Left cardiac atrium (tissue), 4 donors: ENCODE measurements at regions of chr14 and their contacts with region 1.

Region 1: GRCh38 chr14:50116181-50116956 is at the start of gene VCPKMT:
- DNase-seq: peak; percentile 97
- ATAC-seq: peak; percentile 100
- total RNA-seq, gene VCPKMT: 3.1 to 5.0 TPM

Region 2: GRCh38 chr14:49862089-49862673 is 254.2 kb before region 1 on chr14:
- intact Hi-C with region 1: loop called in 1 of 2 experiments (anchors 5 kb)
- DNase-seq: peak; percentile 88
- ATAC-seq: peak; percentile 58 to 60